Activated naive CD4-positive, alpha-beta T cell treated with anti-CD3 and anti-CD28 coated beads for 36 hours (primary cell): ENCODE measurements at regions of chr3 and their contacts with region 1.

Region 1: GRCh38 chr3:101195951-101196713 is 124.2 kb downstream of the IMPG2 start:
- DNase-seq: no peak
- H3K4me3 Mint-ChIP-seq: no peak overlapping the region
- H3K27ac Mint-ChIP-seq: no peak overlapping the region
- H3K4me1 Mint-ChIP-seq: no peaks in the 10 kb centered on the region
- H3K27me3 Mint-ChIP-seq: peaks cover 9% of the 10 kb centered on the region

Region 2: DNA sequence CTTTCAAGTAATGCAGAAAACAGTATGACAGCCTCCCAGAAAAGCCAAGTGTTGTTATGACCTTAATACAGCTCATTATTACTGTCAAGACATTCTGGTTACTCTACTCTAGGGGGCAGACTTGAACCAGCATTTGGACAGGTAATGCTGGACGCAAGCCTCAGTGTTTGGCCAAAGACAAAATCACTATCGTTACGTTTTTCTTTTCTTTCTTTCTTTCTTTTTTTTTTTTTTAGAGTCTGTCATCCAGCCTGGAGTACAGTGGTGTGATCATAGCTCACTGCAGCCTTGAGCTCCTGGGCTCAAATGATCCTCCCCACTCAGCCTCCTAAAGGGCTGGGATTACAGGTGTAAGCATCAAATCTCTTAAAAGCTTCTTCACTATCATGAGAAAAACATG is 733.1 kb before region 1 on chr3:
- CTCF ChIA-PET with region 1: no interaction called
- intact Hi-C with region 1: loop called (anchors 10 kb)
- DNase-seq: peak; percentile 27
- H3K4me3 Mint-ChIP-seq: no peak overlapping the region
- H3K27ac Mint-ChIP-seq: no peak overlapping the region
- H3K4me1 Mint-ChIP-seq: peaks cover 5% of the 10 kb centered on the region
- H3K27me3 Mint-ChIP-seq: peaks cover 3% of the 10 kb centered on the region

Region 3: DNA sequence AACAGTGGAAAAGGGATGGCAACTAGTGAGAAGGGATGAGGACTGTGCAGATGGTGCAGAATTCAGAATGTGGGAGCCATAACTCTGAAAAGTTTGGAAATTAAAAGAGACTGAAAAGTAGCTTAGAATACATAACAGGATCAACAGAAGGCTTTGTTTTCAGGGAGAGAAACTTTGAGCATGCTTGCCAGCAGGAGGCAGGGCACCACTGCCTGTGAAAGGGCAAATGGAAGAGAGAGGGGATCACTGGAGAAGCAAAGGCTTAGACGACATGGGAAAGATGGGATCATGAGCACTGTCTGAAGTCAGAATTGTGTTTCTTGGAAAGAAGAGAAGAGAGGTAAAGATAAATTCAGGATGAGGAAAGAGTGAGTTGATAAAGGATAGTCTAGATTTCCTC is 302.5 kb before region 1 on chr3:
- CTCF ChIA-PET with region 1: no interaction called
- intact Hi-C with region 1: loop called (anchors 10 kb)
- DNase-seq: no peak
- H3K4me3 Mint-ChIP-seq: no peak overlapping the region
- H3K27ac Mint-ChIP-seq: no peak overlapping the region
- H3K4me1 Mint-ChIP-seq: no peaks in the 10 kb centered on the region
- H3K27me3 Mint-ChIP-seq: peaks cover 21% of the 10 kb centered on the region

Region 4: GRCh38 chr3:101069901-101070798 is 126.0 kb before region 1 on chr3:
- CTCF ChIA-PET with region 1: interaction called, 19 read pairs
- intact Hi-C with region 1: loop called (anchors 1 kb)
- DNase-seq: peak; percentile 84
- H3K4me3 Mint-ChIP-seq: no peak overlapping the region
- H3K27ac Mint-ChIP-seq: no peak overlapping the region
- H3K4me1 Mint-ChIP-seq: peaks cover 6% of the 10 kb centered on the region
- H3K27me3 Mint-ChIP-seq: peaks cover 17% of the 10 kb centered on the region

Region 5: GRCh38 chr3:101229681-101230080 is 33.5 kb after region 1 on chr3:
- CTCF ChIA-PET with region 1: no interaction called
- intact Hi-C with region 1: no loop called
- DNase-seq: no peak
- H3K4me3 Mint-ChIP-seq: no peak overlapping the region
- H3K27ac Mint-ChIP-seq: no peak overlapping the region
- H3K4me1 Mint-ChIP-seq: no peaks in the 10 kb centered on the region
- H3K27me3 Mint-ChIP-seq: no peaks in the 10 kb centered on the region